PC-9 (cell line): ENCODE measurements at regions of chr2 and their contacts with region 1.

Region 1: DNA sequence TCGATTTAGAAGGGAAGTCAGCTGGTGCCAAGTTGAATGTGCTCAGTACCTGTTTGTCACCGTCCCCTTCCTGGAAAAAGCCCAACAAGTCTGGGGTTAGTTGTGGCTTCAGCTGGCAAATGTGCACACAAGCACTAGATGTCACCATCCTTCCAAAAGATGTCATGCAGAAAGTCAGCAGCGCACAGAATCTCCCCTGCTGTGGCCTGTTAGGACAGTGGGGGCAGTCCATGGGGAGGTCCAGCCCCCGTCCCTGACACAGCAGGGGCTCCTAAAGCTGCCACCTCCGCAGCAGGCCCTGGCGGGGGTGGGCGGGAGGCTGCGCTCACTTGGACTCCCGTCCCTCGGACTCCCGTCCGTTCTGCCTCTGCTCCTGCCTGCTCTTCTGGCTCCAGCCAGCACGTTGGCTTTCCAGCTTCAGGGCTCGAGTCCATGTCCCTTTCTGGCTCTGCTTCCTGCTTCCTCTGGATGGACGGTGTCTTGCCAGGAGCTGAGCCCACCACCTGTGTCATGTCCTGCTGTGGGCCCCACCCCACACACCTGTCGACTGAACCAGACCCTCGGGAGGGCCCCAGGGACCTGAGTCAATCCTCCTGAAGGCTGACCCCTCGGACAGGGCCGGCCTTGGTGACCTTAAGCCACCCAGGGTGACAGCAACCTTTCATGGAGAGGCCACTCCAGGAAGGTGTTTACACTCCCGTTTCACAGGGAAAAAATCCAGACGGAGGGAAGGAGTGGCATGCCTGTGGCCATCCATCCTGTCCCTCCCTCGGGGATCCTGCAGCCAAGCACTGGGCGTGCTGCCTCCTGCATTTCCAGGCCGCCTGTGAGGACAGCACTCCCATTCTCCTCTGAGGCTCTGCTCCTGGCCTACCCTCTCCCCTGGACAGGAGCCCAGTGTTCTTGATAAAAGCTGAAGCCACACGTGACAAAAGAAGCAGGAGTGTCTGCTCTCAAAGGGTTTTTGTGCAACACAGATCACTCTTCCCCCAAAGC is 8.5 kb downstream of the RAB17 start:
- DNase-seq: no peak
- H3K4me3 ChIP-seq: no peak overlapping the region
- H3K27ac ChIP-seq: no peak overlapping the region
- H3K4me1 ChIP-seq: no peaks in the 10 kb centered on the region
- H3K27me3 ChIP-seq: no peaks in the 10 kb centered on the region
- CTCF ChIP-seq: no peak

Region 2: GRCh38 chr2:236892721-236893120 is 689.3 kb before region 1 on chr2:
- CTCF ChIA-PET with region 1: no interaction called
- POLR2A ChIA-PET with region 1: interaction called, 17 read pairs
- intact Hi-C with region 1: no loop called
- DNase-seq: no peak
- H3K4me3 ChIP-seq: no peak overlapping the region
- H3K27ac ChIP-seq: no peak overlapping the region
- H3K4me1 ChIP-seq: no peaks in the 10 kb centered on the region
- H3K27me3 ChIP-seq: peaks cover 33% of the 10 kb centered on the region; the same call in 1 of the 2 replicates
- CTCF ChIP-seq: no peak

Region 3: GRCh38 chr2:237616734-237617586 is 34.9 kb after region 1 on chr2:
- CTCF ChIA-PET with region 1: no interaction called
- POLR2A ChIA-PET with region 1: no interaction called
- intact Hi-C with region 1: no loop called
- DNase-seq: peak in 1 of 2 experiments; percentile 50
- H3K4me3 ChIP-seq: no peak overlapping the region
- H3K27ac ChIP-seq: no peak overlapping the region
- H3K4me1 ChIP-seq: peaks cover 19% of the 10 kb centered on the region
- H3K27me3 ChIP-seq: no peaks in the 10 kb centered on the region
- CTCF ChIP-seq: no peak